ENCODE measurements at regions of chr7 and their contacts with region 1.

Region 1: DNA sequence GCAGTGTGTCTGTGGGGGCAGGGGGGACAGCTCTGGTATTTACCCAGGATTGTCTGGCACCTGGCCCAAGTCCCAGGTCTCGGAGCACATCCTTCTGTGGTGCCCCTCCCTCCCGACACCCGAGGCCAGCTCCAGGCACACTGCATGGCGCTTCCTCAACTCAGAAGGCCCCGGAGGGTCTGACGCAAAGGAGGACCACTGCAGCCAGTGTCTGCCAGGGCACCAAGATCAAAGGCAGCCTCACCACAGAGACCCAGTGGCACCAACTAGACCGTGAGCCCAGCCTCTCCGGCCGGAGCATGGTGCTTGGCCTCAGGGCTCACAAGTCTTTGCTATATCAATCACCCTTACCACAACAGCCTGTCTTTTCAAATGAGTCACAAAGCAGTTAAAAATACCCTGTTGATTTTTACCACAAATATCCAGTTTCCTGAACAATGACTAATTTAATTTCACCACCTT is 99.3 kb upstream of the DDC start:
- DNase-seq: peak; percentile 81 to 98
- H3K4me3 ChIP-seq: peak overlapping the region; percentile 7; the same call in 1 of the 2 replicates
- H3K27ac ChIP-seq: peak overlapping the region; percentile 74
- H3K4me1 ChIP-seq: peaks cover 29% of the 10 kb centered on the region
- H3K27me3 ChIP-seq: no peaks in the 10 kb centered on the region
- CTCF ChIP-seq: no peak

Region 2: DNA sequence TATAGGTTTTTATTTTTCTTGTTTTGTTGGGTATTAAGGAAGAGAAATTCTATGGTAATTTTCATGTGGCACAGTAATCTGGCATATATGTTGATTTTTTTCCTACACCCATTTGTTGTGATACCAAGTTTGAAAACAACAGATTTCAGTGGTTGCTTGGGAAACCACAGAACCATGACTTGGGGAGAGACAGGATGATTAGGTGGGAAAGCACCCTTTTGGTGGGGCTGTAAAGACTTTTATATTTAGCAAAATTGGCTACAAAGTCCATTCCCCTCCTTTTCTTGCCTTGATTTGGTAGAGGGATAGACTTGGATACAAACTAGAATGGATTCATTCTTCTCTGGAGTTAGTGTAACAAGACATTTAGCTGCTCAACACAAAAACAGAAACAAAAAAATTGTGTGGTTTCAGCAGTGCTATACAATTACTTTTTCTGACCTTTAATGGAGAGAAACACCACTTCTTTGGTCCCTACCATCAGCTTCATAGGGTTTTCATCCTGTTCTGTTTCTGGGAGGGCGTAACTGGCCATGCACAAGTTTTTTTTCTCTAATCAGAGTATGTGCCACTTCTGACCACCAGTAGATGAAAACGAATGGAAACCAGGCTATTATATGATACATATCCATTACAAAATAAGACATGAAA is 267.0 kb before region 1 on chr7:
- CTCF ChIA-PET with region 1: no interaction called
- POLR2A ChIA-PET with region 1: no interaction called
- intact Hi-C with region 1: no loop called
- DNase-seq: no peak
- H3K4me3 ChIP-seq: no peak overlapping the region
- H3K27ac ChIP-seq: no peak overlapping the region
- H3K4me1 ChIP-seq: no peaks in the 10 kb centered on the region
- H3K27me3 ChIP-seq: peaks cover 92% of the 10 kb centered on the region
- CTCF ChIP-seq: no peak

Region 3: GRCh38 chr7:50687575-50688225 is 23.2 kb after region 1 on chr7:
- CTCF ChIA-PET with region 1: no interaction called
- POLR2A ChIA-PET with region 1: no interaction called
- intact Hi-C with region 1: no loop called
- DNase-seq: no peak
- H3K4me3 ChIP-seq: no peak overlapping the region
- H3K27ac ChIP-seq: no peak overlapping the region
- H3K4me1 ChIP-seq: peaks cover 22% of the 10 kb centered on the region
- H3K27me3 ChIP-seq: no peaks in the 10 kb centered on the region
- CTCF ChIP-seq: no peak

Region 4: DNA sequence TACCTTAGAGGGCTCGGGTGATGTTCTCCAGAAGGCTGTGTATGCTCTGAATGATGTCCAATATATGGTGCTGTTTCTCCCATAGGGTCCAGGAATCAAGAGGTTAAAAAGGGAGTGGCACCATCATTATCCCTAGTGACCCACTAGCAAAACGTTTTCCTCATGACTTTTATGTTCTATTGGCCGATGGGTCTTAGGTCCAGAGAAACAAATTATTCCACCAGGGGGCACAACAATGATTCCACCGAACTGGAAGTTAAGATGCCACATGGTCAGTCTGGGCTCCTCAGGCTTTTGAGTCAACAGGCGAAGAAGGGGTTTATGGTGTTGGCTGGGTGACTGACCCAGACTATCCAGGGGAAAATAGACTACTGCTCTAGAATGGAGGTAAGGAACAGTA is 396.0 kb after region 1 on chr7:
- CTCF ChIA-PET with region 1: no interaction called
- POLR2A ChIA-PET with region 1: no interaction called
- intact Hi-C with region 1: no loop called
- DNase-seq: no peak
- H3K4me3 ChIP-seq: no peak overlapping the region
- H3K27ac ChIP-seq: no peak overlapping the region
- H3K4me1 ChIP-seq: no peaks in the 10 kb centered on the region
- H3K27me3 ChIP-seq: no peaks in the 10 kb centered on the region
- CTCF ChIP-seq: 0 out of 2 replicates have a peak, but pooled peaks have one; percentile 29

Region 5: DNA sequence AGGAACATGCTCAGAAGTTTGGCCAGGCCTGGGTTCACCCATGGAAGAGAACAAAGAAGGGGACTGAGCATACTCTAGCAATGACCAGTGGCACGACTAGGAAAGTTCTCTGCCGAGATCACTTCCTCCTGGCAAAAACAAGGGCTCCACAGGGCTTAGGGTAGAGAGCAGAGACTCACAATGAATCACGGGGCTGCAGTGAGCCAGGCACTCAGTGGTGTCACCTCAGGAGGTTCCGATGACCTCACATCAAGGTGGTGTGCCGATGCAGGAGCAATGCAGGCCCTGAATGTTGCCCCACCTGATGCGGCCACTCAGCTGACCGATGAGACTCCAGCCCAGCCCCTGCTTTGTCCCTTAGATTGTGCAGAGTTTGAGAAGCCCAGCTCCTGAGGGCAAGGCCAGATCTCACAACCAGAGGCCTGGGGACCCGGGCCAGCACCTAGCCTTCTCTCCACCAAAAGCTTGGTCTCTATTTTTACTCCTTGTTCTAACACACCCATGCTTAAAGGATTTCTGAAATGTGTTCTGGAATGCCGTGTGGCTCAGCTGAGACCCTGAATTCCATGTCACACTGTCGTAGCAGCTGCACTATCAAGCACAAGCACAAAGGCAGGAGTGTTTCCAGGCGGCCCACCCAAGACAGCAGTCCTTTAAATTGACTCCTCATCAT is 591.2 kb after region 1 on chr7:
- CTCF ChIA-PET with region 1: interaction called, 13 read pairs
- POLR2A ChIA-PET with region 1: no interaction called
- intact Hi-C with region 1: no loop called
- DNase-seq: peak; percentile 49 to 73
- H3K4me3 ChIP-seq: no peak overlapping the region
- H3K27ac ChIP-seq: no peak overlapping the region
- H3K4me1 ChIP-seq: peaks cover 23% of the 10 kb centered on the region
- H3K27me3 ChIP-seq: no peaks in the 10 kb centered on the region
- CTCF ChIP-seq: no peak